A549 (cell line): ENCODE measurements at regions of chr15 and their contacts with region 1.

Region 1: GRCh38 chr15:73273181-73274002 is 95.4 kb downstream of the HCN4 start:
- DNase-seq: peak; percentile 68 to 69
- ATAC-seq: peak; percentile 99 to 100
- H3K4me3 ChIP-seq: no peak overlapping the region
- H3K27ac ChIP-seq: no peak overlapping the region
- H3K4me1 ChIP-seq: peaks cover 9% of the 10 kb centered on the region; the same call in 1 of the 3 replicates
- CTCF ChIP-seq: peak; percentile 90
- EP300 ChIP-seq: no peak
- POLR2A ChIP-seq: no peak
- RAD21 ChIP-seq: peak; percentile 77 to 80

Region 2: DNA sequence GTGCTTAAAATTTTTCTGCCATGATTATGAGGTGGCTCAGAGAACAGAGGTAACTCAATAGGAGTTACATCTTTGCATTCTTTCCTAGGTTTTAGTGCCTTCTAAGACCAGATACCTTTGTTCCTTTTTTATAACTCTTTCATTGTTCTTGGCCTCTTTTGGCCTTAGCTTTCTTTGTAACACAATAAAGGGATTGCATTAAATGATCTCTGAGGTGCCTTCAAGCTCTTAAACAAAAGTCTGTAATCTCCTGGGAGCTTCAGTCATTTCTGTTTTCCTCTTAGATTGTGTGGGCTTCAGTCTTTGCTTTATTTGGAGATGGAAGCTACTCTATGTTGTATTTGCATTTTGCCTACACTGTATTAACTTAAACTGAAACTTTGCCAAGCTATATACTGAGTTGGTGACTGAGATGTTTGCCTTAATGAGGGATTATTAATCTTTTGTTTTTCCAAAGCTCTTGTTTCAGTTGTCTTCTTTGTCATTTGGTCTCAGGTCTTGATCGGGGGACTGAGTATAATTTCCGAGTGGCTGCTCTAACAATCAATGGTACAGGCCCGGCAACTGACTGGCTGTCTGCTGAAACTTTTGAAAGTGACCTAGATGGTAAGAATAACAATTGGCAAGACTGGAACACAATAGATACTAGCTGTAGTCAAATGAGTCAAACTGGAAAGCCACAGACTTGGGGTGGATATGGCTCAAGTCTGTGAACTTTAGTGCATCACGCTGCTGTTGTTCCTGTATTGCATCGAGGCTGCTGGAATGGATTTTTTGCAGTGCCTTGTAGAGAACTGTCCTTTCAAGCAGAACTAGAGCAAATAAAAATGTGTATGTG is 14.9 kb before region 1 on chr15:
- CTCF ChIA-PET with region 1: interaction called, 45 read pairs
- POLR2A ChIA-PET with region 1: no interaction called
- DNase-seq: no peak
- ATAC-seq: no peak
- H3K4me3 ChIP-seq: no peak overlapping the region
- H3K27ac ChIP-seq: no peak overlapping the region
- H3K4me1 ChIP-seq: no peaks in the 10 kb centered on the region
- CTCF ChIP-seq: no peak
- EP300 ChIP-seq: no peak
- POLR2A ChIP-seq: no peak
- RAD21 ChIP-seq: no peak

Region 3: DNA sequence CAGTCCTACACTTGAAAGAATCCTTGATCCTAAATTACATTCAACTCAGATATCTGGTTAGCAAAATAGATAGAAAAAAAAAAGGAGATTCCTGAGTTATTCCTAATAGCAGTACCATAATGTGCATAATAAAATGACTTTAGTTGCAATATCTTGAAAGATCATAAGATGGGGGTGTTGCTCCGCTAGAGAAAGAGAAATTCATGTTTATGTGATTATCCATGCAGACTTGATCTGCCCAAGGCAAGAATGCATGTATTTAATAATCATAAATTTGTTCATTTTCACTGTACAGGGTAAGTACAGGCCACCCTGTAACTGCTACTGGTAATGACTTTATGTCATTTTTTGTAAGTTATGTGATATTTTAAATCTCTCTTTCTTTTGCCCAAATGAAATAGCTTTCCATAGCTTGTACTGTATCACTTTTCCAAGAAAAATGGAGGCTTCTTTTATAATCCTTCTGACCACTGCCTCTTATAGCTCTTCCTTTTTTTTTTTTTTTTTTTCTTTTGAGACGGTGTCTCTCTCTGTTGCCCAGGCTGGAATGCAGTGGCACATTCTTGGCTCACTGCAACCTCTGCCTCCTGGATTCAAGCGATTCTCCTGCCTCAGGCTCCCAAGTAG is 10.8 kb after region 1 on chr15:
- CTCF ChIA-PET with region 1: interaction called, 112 read pairs
- POLR2A ChIA-PET with region 1: no interaction called
- DNase-seq: peak in 1 of 2 experiments; percentile 17
- ATAC-seq: peak; percentile 57; a peak in 4 of 6 replicates
- H3K4me3 ChIP-seq: no peak overlapping the region
- H3K27ac ChIP-seq: no peak overlapping the region
- H3K4me1 ChIP-seq: no peaks in the 10 kb centered on the region
- CTCF ChIP-seq: peak; percentile 37
- EP300 ChIP-seq: no peak
- POLR2A ChIP-seq: no peak
- RAD21 ChIP-seq: peak; percentile 52 to 58

Region 4: DNA sequence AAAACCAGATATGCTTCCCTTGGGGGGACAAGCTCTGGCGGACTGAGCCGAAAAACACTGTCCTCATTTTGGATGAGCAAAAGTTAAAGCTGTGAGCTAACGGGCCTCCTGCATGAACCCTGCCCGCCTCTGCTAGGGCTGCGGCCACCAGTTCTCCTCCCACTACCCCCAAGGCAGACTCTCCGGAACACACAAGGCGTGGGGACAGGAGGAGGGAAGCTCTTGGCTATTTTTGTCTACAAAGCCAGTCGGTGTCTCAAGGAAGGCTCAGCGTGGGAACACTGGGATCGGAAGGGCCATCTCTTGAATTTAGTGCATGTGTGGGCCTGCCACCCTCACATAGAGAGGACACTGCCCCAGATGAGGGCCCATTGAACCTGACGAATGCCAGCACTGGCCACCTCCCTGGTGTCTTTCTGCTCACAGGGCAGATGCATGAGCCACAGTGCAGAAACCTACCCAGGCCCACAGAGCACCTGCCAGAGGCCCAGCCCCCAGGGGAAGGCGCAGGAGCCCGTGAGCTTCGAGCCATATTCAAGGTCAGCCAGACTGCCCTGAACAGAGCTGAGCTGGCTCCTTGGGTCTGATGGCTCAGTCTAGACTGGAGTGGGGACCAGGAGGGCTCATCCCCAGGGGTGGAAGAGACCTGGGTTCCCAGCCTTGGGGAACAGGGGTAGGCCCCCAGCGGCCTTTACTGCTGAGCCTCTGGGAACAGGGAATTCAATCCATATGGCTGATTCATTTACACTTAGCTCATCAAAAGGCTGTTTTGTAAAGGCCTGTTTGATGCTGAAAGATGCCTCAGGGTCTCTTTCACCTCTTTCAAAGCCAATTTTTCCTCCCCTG is 57.0 kb after region 1 on chr15:
- CTCF ChIA-PET with region 1: no interaction called
- POLR2A ChIA-PET with region 1: no interaction called
- DNase-seq: no peak
- ATAC-seq: no peak
- H3K4me3 ChIP-seq: no peak overlapping the region
- H3K27ac ChIP-seq: no peak overlapping the region
- H3K4me1 ChIP-seq: no peaks in the 10 kb centered on the region
- CTCF ChIP-seq: no peak
- EP300 ChIP-seq: no peak
- POLR2A ChIP-seq: no peak
- RAD21 ChIP-seq: no peak